Mammary epithelial cell (primary cell): ENCODE measurements at regions of chr15 and their contacts with region 1.

Region 1: DNA sequence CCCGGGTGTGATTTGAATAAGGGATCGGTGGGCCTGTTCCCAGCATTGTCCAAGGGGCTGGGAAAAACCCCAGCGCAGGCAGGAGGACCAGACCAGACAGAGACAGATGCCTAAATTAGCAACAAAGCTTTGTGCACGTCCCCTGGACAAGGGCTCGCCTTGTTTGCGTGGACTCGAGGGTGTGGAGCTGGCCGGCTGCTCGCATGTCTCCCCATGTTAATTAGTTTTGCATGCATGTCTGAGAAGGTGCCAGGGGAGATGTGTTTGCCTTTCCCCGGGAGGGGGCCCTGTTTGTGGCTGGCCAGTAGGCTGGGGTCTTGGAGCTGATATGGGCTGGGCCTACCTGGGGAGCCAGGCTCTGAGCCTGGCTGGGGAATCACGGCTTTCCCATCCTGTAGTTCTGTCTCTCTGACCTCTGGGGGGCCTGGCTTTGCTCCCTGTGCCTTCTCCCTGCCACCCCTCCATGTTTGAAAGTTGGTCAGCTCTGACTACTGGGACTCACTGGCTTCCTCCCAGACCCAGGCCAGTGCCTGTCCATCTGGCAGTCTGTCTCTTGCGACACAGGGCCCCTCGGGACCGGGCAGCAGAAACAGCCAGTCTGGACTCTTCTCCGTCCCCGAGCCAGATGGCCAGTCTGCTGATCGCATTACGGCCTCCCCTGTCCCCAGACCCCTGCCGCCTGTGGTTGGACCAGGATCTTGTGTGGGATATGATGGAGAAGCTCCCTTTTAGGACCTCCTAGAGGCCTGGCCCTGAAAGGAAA is 55.4 kb upstream of the POLG start:
- DNase-seq: no peak
- H3K4me3 ChIP-seq: no peak overlapping the region
- H3K27ac ChIP-seq: no peak overlapping the region
- H3K4me1 ChIP-seq: no peaks in the 10 kb centered on the region
- H3K27me3 ChIP-seq: peaks cover 11% of the 10 kb centered on the region
- CTCF ChIP-seq: no peak

Region 2: DNA sequence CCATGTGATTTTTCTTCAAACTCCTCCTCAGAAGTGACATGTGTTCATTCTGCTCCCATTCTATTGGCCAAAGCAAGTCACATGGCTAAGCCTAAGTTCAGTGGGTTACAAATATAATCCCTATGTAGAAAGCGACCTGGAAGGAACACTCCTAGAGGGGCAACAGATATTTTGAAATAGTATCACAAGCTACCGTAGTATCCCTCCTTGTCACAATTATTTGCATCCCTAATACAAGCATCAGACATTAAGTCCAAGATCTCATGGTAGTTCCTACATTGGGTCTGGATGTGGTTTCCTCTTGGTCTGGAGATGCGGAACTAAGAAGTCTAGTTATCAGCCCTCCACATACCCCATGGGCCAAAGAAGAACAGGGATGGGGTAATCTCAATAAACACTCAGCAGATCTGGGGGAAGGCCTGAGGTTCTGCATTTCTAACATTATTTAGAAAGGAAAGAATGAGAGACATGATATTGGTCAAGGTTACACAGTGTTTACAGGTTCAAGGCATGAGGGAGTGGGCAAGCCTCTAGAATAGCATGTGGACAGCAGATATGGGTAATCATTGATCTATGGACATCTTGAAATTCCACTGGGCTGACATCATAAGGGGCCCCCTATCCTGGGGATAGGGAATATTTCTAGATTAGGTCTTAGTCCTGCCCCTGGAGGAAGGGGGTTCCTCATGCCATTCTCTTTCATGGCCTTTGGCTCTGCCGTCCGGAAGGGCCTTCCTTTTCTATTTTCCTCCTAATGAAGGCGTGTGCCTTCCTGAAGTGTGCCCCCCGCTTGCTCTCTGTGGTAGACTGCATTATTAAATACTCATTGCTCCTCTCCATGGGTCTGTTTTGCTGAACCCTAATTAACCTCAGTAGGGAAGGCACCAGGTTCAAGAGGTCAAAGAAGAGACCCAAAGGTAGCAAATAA is 319.6 kb before region 1 on chr15:
- CTCF ChIA-PET with region 1: no interaction called
- dilution Hi-C with region 1: no loop called
- in situ Hi-C with region 1: no loop called
- intact Hi-C with region 1: no loop called
- DNase-seq: no peak
- H3K4me3 ChIP-seq: no peak overlapping the region
- H3K27ac ChIP-seq: no peak overlapping the region
- H3K4me1 ChIP-seq: peaks cover 24% of the 10 kb centered on the region
- H3K27me3 ChIP-seq: no peaks in the 10 kb centered on the region
- CTCF ChIP-seq: no peak

Region 3: DNA sequence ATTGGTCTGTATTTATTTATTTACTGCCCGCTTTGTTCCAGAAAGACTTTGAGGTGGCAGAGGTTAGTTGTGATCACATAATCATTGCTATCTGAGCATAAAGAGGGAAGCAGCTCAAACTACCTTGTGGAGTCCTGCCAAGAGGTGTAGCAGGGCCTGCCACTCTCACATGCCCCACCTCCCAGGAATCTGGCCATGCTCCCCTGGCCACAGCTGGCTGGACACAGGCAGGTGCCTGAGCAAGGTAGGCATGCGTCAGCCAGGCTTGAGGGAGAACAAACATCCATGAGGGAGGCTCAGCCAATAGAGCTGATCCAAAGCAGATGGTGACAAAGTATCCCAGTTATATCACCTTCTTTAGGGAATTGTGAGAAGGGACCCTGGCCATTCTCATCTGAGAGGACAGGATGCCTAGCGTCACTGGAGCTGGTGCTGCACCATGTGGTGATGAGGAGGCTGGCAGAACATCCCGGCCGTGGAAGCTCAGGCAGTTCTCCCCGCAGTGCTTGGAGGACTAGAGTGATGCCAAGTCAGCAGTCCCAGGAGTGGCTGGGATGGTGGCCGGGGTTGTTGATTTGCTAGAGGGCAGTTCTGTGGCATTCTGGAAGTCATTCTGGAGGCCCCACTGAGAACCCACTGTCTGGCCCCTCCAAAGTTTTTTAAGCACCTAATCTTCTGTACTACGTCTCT is 48.6 kb before region 1 on chr15:
- CTCF ChIA-PET with region 1: no interaction called
- dilution Hi-C with region 1: loop called (anchors 5 kb)
- in situ Hi-C with region 1: no loop called
- intact Hi-C with region 1: no loop called
- DNase-seq: no peak
- H3K4me3 ChIP-seq: no peak overlapping the region
- H3K27ac ChIP-seq: no peak overlapping the region
- H3K4me1 ChIP-seq: no peaks in the 10 kb centered on the region
- H3K27me3 ChIP-seq: peaks cover 3% of the 10 kb centered on the region
- CTCF ChIP-seq: no peak

Region 4: GRCh38 chr15:89472785-89473256 is 82.8 kb after region 1 on chr15:
- CTCF ChIA-PET with region 1: no interaction called
- dilution Hi-C with region 1: loop called (anchors 5 kb)
- in situ Hi-C with region 1: no loop called
- intact Hi-C with region 1: no loop called
- DNase-seq: peak; percentile 37
- H3K4me3 ChIP-seq: no peak overlapping the region
- H3K27ac ChIP-seq: no peak overlapping the region
- H3K4me1 ChIP-seq: peaks cover 8% of the 10 kb centered on the region
- H3K27me3 ChIP-seq: peaks cover 4% of the 10 kb centered on the region
- CTCF ChIP-seq: peak; percentile 80 to 92